ENCODE measurements at regions of chr2 and their contacts with region 1.

Region 1: GRCh38 chr2:8681786-8682692 is at the start of gene ID2:
- DNase-seq: peak; percentile 99
- H3K4me3 ChIP-seq: peak within 1 kb of the TSS; percentile 49 to 73 (median 52)
- H3K27ac ChIP-seq: peak within 1 kb of the TSS; percentile 98
- H3K4me1 ChIP-seq: peaks cover 61% of the 10 kb centered on the region
- H3K27me3 ChIP-seq: peaks cover 8 to 25% of the 10 kb centered on the region in 2 experiments
- CTCF ChIP-seq: no peak
- POLR2A ChIP-seq: peak; percentile 99
- total RNA-seq, gene ID2: 4.1 and 4.7 TPM in 2 replicates

Region 2: DNA sequence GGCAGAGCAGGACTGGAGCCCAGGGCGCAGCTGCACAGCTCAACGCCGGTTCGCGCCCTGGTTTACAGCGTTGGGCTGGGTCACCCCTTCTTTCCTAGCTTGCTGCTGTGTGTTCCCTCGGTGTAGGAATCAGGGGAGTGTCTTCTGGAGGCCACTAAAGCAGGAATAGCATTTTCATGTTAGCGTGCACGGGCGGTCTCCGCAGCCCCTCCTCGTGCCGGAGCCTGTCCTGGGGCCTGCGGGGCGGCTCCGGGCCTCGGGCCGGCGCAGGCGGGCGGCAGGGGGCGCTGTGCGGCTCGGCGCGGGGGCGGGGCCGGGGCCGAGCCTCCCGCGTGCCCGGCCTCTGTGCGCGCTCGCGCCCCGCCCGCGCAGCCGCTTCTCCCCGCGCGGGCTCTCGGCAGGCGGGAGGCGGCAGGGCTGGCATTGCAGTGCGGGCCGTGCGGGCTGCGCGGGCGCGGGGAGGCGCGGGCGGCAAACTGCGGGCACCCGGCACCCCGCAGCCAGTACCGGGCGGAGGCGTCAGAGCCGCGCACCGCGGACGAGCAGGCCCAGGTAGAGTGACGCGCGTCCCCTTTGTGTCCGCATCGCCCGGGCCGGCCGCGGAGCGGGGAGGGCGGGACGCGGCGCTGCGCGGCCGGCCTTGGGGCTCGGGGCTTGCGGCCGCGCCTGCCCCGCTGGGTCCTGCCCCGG is 1764.8 kb before region 1 on chr2 and contains the start of gene RNF144A:
- CTCF ChIA-PET with region 1: no interaction called
- POLR2A ChIA-PET with region 1: no interaction called
- dilution Hi-C with region 1: no loop called
- intact Hi-C with region 1: loop called (anchors 5 kb)
- DNase-seq: peak; percentile 40
- H3K4me3 ChIP-seq: peak within 1 kb of the TSS; percentile 28 to 58 (median 51)
- H3K27ac ChIP-seq: no peak within 1 kb of the TSS
- H3K4me1 ChIP-seq: no peaks in the 10 kb centered on the region
- H3K27me3 ChIP-seq: peaks cover 0 to 2% of the 10 kb centered on the region in 2 experiments
- CTCF ChIP-seq: peak; percentile 43 to 51
- POLR2A ChIP-seq: no peak
- total RNA-seq, gene RNF144A: 19.7 and 28.8 TPM in 2 replicates

Region 3: GRCh38 chr2:7097348-7097895 is 1584.6 kb before region 1 on chr2:
- CTCF ChIA-PET with region 1: interaction called, 7 read pairs
- POLR2A ChIA-PET with region 1: no interaction called
- dilution Hi-C with region 1: no loop called
- intact Hi-C with region 1: loop called (anchors 1 kb)
- DNase-seq: peak; percentile 57
- H3K4me3 ChIP-seq: no peak overlapping the region
- H3K27ac ChIP-seq: no peak overlapping the region
- H3K4me1 ChIP-seq: no peaks in the 10 kb centered on the region
- H3K27me3 ChIP-seq: no peaks in the 10 kb centered on the region
- CTCF ChIP-seq: peak; percentile 94 to 99
- POLR2A ChIP-seq: no peak

Region 4: DNA sequence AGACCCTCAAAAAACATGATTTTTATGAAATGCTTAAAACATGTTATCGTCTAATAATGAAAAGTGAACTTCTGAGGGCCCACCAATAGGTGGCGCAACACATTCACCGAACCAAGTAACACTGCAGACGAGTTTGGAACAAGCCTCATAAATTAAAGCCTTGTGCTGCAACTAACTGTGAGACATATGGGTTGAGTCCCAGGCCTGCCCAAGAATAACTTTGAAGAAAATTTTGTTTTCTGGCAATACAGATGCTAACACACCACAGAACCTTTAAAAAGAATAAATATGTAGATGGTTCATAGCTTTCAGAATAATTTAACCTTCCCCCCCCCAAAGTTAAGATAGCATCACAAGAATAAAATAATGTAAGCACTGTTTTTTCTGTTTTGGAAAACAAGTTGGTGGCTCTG is 1479.0 kb before region 1 on chr2:
- CTCF ChIA-PET with region 1: interaction called, 3 read pairs
- POLR2A ChIA-PET with region 1: no interaction called
- dilution Hi-C with region 1: no loop called
- intact Hi-C with region 1: loop called (anchors 1 kb)
- DNase-seq: peak; percentile 33
- H3K4me3 ChIP-seq: no peak overlapping the region
- H3K27ac ChIP-seq: no peak overlapping the region
- H3K4me1 ChIP-seq: no peaks in the 10 kb centered on the region
- H3K27me3 ChIP-seq: no peaks in the 10 kb centered on the region
- CTCF ChIP-seq: peak; percentile 63 to 65
- POLR2A ChIP-seq: no peak

Region 5: GRCh38 chr2:8152392-8153257 is 529.4 kb before region 1 on chr2:
- CTCF ChIA-PET with region 1: no interaction called
- POLR2A ChIA-PET with region 1: no interaction called
- dilution Hi-C with region 1: no loop called
- intact Hi-C with region 1: loop called (anchors 1 kb)
- DNase-seq: no peak
- H3K4me3 ChIP-seq: no peak overlapping the region
- H3K27ac ChIP-seq: no peak overlapping the region
- H3K4me1 ChIP-seq: peaks cover 40% of the 10 kb centered on the region
- H3K27me3 ChIP-seq: no peaks in the 10 kb centered on the region
- CTCF ChIP-seq: no peak
- POLR2A ChIP-seq: no peak

Region 6: DNA sequence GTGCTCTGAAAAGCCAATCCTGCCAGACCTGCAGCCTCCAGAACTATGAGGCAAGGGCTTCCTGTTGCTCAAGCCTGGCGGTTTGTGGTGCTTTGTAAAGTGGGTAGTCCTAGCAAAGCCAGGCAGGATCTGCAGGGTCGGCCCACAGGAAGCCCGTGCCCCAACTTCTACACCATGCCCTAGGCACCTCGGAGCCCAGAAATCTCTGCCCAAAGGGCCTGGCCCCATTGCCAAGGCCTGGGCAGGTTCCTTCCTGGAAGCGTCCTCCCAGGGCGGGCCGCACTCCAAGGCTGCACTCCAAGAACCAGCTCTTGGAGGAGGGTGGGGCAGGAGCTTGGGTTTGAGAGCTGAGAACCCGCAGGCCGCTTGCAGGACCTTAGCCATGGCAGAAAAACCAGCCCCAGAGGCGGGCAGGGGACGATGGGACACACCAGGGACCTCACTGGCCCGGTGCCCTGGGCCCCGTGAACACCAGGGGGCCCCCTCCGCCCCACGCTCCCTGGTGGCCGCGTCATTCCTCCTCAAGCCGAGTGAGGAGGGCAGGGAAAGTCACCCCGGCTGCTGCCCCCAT is 37.3 kb before region 1 on chr2:
- CTCF ChIA-PET with region 1: no interaction called
- POLR2A ChIA-PET with region 1: no interaction called
- dilution Hi-C with region 1: no loop called
- intact Hi-C with region 1: loop called (anchors 1 kb)
- DNase-seq: no peak
- H3K4me3 ChIP-seq: no peak overlapping the region
- H3K27ac ChIP-seq: no peak overlapping the region
- H3K4me1 ChIP-seq: no peaks in the 10 kb centered on the region
- H3K27me3 ChIP-seq: no peaks in the 10 kb centered on the region
- CTCF ChIP-seq: peak in 1 of 2 donors; percentile 40
- POLR2A ChIP-seq: no peak